ENCODE measurements at regions of chr2 and their contacts with region 1.

Region 1: DNA sequence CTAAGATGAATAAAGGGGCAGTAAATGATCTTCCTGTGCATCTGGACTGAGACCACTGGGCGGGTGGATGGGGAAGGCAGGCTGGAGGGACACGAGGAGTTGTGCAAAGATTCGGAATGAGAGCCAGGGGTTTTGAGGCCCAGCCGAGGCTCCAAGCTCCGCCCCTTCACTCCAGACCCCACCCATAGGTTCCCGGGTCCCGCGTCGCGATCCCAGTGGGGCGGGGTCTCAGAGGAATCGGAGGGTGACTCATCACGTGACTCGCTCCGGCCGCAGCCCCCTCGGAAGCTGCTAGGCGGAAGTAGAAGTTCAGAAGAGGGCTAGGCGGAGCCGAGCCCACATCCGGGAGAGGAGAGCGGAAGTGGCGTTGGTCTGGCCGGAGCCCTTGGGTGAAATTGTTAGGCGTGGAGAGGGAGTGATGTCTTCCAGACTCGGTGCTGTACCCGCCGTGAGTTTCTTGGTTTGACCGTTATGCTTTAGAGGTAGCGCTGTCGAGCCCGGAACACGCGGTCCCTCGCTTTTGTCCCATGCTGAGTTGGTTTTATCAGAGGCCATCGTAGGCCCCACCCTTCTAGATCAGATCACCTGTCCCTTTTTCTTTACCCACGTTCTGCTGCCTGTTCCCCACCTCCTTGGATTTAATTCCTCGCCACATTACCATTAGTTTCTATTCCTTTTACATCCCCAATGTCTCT is at the start of gene ZNF512:
- DNase-seq: peak; percentile 78 to 93 (median 86)

Region 2: GRCh38 chr2:27628767-27629709 is 46.2 kb after region 1 on chr2 and contains the starts of genes CCDC121 and GPN1:
- intact Hi-C with region 1: loop called (anchors 5 kb)
- DNase-seq: peak; percentile 86 to 98 (median 94)